GM23248 (cell line): ENCODE measurements at regions of chr4 and their contacts with region 1.

Region 1: DNA sequence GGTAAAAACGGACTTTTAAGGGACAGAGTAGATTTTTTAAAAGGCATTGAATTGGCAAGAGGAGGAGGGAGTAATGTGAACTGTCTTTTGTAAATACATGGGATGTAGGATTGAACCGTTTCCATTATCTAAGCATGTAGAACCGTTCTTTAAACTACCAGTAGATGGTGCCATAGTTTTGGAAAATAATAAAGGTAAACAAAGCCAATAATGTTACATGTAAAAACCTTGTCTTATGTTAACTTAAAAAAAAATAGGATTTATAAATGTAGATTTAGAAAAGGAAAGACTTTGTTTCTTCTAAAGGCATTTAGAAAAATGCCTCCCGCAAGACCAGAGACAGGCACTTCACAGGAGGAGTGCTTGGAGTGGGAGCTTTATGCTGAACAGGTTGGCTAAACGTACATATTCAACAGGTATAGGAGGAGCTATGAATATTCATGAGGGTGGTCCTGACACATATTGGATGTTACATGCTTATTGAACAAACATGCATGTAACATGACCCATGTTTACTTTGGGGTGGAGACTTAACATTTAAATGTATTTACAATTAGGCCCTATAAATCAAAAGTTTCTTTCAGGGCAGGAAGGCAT is 45.5 kb upstream of the FAM241A start:
- DNase-seq: peak; percentile 73
- H3K4me3 ChIP-seq: no peak overlapping the region
- H3K27ac ChIP-seq: no peak overlapping the region
- H3K4me1 ChIP-seq: no peaks in the 10 kb centered on the region
- H3K27me3 ChIP-seq: no peaks in the 10 kb centered on the region

Region 2: GRCh38 chr4:112231779-112232713 is 132.2 kb after region 1 on chr4 and contains the start of gene AP1AR:
- in situ Hi-C with region 1: loop called (anchors 10 kb)
- DNase-seq: peak; percentile 92
- H3K4me3 ChIP-seq: peak within 1 kb of the TSS; percentile 90
- H3K27ac ChIP-seq: peak within 1 kb of the TSS; percentile 92
- H3K4me1 ChIP-seq: peaks cover 28% of the 10 kb centered on the region
- H3K27me3 ChIP-seq: no peaks in the 10 kb centered on the region
- total RNA-seq, gene AP1AR: 17.2 and 21.3 TPM in 2 replicates

Region 3: DNA sequence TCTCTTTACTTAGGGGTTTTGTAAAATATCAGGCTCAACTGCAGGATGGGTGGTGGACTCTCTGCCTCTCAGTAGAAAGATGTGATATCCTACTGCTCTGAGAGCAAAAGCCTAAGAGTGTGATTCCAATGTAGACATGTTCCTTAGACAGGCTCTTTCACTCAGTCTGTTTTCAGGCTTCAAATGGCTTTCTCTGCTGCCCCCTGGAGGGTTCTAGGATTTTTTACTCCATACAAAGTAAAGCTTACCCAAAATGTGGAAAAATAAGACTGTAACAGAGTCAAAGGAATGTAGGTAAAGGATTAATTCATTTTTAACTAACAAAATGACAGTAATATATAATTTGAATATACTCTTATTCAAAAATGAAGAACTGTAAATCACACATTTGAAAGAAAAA is 504.8 kb after region 1 on chr4:
- in situ Hi-C with region 1: loop called (anchors 25 kb)
- DNase-seq: peak; percentile 71
- H3K4me3 ChIP-seq: no peak overlapping the region
- H3K27ac ChIP-seq: no peak overlapping the region
- H3K4me1 ChIP-seq: no peaks in the 10 kb centered on the region
- H3K27me3 ChIP-seq: no peaks in the 10 kb centered on the region